Heart left ventricle (tissue), 16 donors: ENCODE measurements at regions of chr4 and their contacts with region 1.

Region 1: DNA sequence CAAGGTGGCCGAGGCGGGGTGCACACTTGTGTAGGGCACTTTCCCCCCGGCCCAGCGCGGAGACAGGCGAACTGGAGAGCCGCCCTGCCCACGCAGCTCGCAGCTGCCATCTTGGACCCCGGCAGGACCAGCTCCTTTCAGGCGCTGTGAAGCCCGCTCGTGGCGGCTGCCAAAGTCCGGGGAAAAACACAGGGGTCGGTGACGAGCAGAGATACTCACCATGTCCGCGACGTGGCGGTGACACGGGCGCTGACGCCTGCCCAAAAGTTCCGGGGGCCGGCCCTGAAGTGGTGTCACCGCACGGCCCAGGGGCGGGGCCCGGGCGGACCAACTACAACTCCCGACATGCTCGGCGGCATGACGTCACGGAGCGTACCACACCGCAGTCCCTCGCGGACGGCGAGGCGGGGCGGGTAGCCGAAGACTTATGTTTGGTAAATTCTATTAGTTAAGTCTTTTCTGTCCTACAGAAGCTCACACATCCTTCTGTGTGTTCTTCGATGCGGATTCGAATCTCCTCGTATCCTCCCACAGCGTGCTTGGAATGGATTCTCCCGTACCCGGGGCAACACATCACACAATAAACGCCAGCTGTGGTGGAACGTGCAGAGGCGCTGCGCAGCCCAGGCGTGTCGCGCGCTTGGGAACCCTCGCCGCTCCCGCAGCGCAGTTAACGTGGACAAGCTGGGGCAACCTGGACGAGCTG is at the start of gene UFSP2:
- DNase-seq: peak; percentile 89 to 94 (median 90)
- ATAC-seq: peak; percentile 96 to 98 (median 97)
- H3K4me3 ChIP-seq: peak within 1 kb of the TSS; percentile 73 to 96 (median 80)
- H3K27ac ChIP-seq: peak within 1 kb of the TSS; percentile 84 to 99 (median 96)
- H3K4me1 ChIP-seq: peaks cover 0 to 41% (median 28%) of the 10 kb centered on the region in 12 donors
- H3K27me3 ChIP-seq: no peaks in the 10 kb centered on the region
- CTCF ChIP-seq: no peak
- POLR2A ChIP-seq: peak in 1 of 2 donors; percentile 82
- total RNA-seq, gene UFSP2: 25.2 to 52.4 (median 35.1) TPM

Region 2: DNA sequence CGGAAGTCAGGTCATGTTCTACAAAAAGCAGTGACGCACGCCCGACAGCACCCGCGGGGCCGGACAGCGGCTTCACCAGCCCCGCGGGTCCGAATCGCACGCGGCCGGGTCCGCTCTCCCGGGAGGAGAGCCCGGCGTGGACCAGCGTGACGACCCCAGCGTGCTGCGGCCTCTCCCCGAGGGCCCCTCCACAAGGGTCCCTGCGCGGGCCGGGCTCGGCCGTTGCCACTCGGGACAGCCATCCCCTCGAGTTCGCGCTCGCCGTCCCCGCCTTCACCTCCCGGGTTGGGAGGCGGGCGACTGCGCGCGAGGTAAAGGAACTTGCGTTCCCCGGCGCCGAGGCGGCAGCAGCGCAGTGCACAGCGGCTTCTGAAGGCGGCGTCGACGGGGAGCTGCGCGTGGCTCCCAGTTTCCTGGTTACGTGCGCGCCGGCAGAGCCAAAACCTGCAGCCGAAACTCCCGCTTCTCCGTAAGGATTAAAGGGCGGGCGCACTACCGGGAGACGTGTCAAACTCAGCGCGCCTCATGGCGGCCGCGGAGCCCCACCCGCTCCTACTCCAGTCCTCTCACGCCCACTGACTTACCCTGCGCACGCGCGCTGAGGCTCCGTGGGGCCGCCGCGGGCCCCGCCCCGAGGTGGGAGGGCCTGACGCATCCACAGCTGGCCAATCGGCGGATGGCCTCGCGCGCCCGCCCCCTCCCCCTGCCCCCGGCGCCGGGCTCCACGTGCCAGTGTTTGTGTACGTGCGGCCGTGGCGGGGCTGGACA is 29.7 kb before region 1 on chr4:
- intact Hi-C with region 1: loop called in 4 of 10 experiments (anchors 1 to 2 kb)
- DNase-seq: peak; percentile 96 to 99 (median 97)
- ATAC-seq: peak; percentile 92 to 98 (median 96)
- H3K4me3 ChIP-seq: peak overlapping the region; percentile 64 to 88 (median 77)
- H3K27ac ChIP-seq: peak overlapping the region; percentile 98 to 100 (median 100)
- H3K4me1 ChIP-seq: peaks cover 0 to 46% (median 26%) of the 10 kb centered on the region in 12 donors
- H3K27me3 ChIP-seq: no peaks in the 10 kb centered on the region
- CTCF ChIP-seq: peak in 2 of 12 donors; percentile 10 to 17
- POLR2A ChIP-seq: peak in 1 of 2 donors; percentile 67